CD8-positive, alpha-beta T cell (primary cell): ENCODE measurements at regions of chr22 and their contacts with region 1.

Region 1: GRCh38 chr22:31211862-31212730 is at the start of gene LIMK2:
- DNase-seq: peak; percentile 93 to 99 (median 97)
- ATAC-seq: peak; percentile 99
- H3K4me3 ChIP-seq: peak within 1 kb of the TSS; percentile 87 to 99
- H3K4me3 Mint-ChIP-seq: peak within 1 kb of the TSS; percentile 88
- H3K27ac ChIP-seq: peak within 1 kb of the TSS; percentile 50 to 80
- H3K27ac Mint-ChIP-seq: peak within 1 kb of the TSS; percentile 92
- H3K4me1 ChIP-seq: peaks cover 30% of the 10 kb centered on the region
- H3K4me1 Mint-ChIP-seq: peaks cover 45% of the 10 kb centered on the region
- H3K27me3 ChIP-seq: no peaks in the 10 kb centered on the region
- H3K27me3 Mint-ChIP-seq: no peaks in the 10 kb centered on the region
- CTCF ChIP-seq: peak; percentile 72
- total RNA-seq, gene LIMK2: 8.4 to 9.1 TPM

Region 2: DNA sequence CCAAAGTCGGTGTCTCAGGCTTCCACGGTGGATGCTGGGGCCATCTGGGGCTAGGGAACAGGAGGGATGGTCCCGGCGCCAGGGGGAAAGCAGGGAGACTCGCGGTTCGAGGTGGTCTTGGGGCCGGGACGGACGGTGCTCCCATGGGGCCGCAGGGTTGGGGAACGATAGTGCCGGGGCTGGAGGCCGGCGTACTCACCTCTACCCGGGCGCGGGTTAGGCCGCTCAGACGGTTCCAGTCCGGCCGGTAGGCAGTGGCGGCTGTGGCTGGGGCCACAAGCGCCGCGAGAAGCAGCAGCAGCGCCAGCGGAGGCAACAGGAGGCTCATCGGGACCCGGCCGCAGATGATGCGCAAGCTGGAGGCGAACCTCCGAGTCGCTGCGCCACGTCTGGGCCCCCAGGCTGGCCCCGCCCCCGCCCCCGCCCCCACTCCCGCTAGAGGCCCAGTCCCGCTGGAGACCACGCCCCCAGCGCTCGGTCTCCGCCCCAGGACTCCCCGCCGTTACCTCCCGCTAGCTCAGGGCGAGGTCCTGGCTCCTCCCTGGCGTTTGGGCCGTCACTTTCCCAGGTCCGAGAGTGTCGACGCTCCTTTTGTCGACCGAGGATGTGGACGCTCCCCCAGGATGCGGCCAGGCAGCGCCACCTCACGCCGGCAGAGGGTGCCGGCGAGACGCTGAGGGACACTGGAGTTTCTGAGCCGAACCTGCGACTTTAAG is 104.8 kb before region 1 on chr22 and contains the start of gene SELENOM:
- CTCF ChIA-PET with region 1: interaction called, 8 read pairs
- POLR2A ChIA-PET with region 1: interaction called, 6 read pairs
- intact Hi-C with region 1: loop called (anchors 1 to 5 kb)
- DNase-seq: peak; percentile 69 to 94 (median 85)
- ATAC-seq: peak; percentile 96
- H3K4me3 ChIP-seq: peak within 1 kb of the TSS; percentile 80 to 84
- H3K4me3 Mint-ChIP-seq: peak within 1 kb of the TSS; percentile 98
- H3K27ac ChIP-seq: peak within 1 kb of the TSS; percentile 72 to 80
- H3K27ac Mint-ChIP-seq: peak within 1 kb of the TSS; percentile 91
- H3K4me1 ChIP-seq: peaks cover 17% of the 10 kb centered on the region
- H3K4me1 Mint-ChIP-seq: peaks cover 25% of the 10 kb centered on the region
- H3K27me3 ChIP-seq: no peaks in the 10 kb centered on the region
- H3K27me3 Mint-ChIP-seq: no peaks in the 10 kb centered on the region
- CTCF ChIP-seq: peak; percentile 70
- total RNA-seq, gene SELENOM: 55.6 to 62.2 TPM

Region 3: DNA sequence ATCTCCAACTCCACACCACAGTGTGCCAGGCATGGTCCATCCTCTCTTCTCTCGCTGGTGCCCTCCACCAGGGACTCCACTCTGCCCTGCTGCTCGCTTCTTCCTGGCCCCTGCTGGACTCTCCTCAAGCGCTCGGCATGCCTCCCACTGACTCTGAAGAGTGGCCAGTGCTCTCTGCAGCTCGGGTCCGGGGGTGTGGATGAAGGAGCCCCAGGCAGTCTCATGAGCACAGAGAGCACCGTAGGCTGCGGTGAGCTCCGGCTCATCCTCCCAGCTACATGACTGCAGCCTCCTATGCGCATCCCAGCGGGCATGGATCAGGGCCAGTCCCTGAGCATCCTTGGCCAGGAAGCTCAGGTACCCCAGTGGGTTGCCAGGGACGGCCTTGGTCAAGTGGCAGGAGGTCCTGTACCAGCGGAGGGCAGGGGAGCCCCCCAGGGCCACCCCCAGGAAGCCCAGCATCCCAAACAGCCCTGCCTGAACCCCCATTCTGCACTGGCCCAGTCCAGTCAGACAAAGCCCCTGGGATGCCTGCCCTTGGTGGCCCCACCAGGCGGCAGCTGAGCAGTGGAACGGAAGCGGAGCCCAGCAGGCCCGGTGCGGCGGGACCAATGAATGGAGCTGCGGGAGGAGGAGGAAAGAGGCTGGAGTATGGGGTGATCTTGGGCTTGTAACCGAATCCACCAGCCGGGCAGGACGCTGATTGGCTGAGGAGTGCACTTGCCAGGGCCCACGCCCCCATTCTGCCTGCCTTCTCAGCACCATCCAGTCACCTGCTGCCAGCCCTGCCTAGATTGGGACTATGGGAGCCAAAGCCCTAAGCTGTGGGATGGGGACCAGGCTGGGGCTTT is 72.0 kb before region 1 on chr22 and contains the start of gene PLA2G3:
- CTCF ChIA-PET with region 1: no interaction called
- POLR2A ChIA-PET with region 1: no interaction called
- intact Hi-C with region 1: no loop called
- DNase-seq: no peak
- ATAC-seq: no peak
- H3K4me3 ChIP-seq: no peak within 1 kb of the TSS
- H3K4me3 Mint-ChIP-seq: no peak within 1 kb of the TSS
- H3K27ac ChIP-seq: no peak within 1 kb of the TSS
- H3K27ac Mint-ChIP-seq: no peak within 1 kb of the TSS
- H3K4me1 ChIP-seq: no peaks in the 10 kb centered on the region
- H3K4me1 Mint-ChIP-seq: no peaks in the 10 kb centered on the region
- H3K27me3 ChIP-seq: no peaks in the 10 kb centered on the region
- H3K27me3 Mint-ChIP-seq: peaks cover 4% of the 10 kb centered on the region
- CTCF ChIP-seq: no peak
- total RNA-seq, gene PLA2G3: not detected

Region 4: DNA sequence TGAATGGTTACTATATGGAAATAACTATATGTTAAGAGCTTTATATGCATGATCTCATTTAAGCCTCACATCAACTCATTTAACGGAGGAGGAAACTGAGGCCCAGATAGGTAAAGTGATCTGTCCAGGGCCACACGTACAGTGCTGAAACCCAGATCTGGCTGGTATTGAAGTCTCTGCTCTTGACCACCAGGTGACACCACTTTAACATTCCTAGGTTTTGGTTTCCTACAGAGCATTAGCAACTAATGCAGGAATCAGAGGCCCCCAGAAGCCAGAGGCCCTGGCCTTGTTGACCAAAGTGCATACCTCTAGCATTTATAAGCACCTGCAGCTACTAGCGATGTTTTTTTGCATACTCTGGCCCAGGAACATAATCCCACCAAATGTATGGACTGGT is 12.9 kb before region 1 on chr22:
- CTCF ChIA-PET with region 1: interaction called, 16 read pairs
- POLR2A ChIA-PET with region 1: interaction called, 3 read pairs
- intact Hi-C with region 1: no loop called
- DNase-seq: peak in 2 of 9 experiments; percentile 12 to 30
- ATAC-seq: no peak
- H3K4me3 ChIP-seq: no peak overlapping the region
- H3K4me3 Mint-ChIP-seq: no peak overlapping the region
- H3K27ac ChIP-seq: no peak overlapping the region
- H3K27ac Mint-ChIP-seq: no peak overlapping the region
- H3K4me1 ChIP-seq: no peaks in the 10 kb centered on the region
- H3K4me1 Mint-ChIP-seq: no peaks in the 10 kb centered on the region
- H3K27me3 ChIP-seq: no peaks in the 10 kb centered on the region
- H3K27me3 Mint-ChIP-seq: no peaks in the 10 kb centered on the region
- CTCF ChIP-seq: no peak

Region 5: GRCh38 chr22:31248138-31248745 is 36.1 kb after region 1 on chr22:
- CTCF ChIA-PET with region 1: no interaction called
- POLR2A ChIA-PET with region 1: interaction called, 5 read pairs
- intact Hi-C with region 1: loop called in 1 of 2 experiments (anchors 5 kb)
- DNase-seq: peak; percentile 40 to 81 (median 72)
- ATAC-seq: peak; percentile 100
- H3K4me3 ChIP-seq: peak overlapping the region; percentile 21 to 33
- H3K4me3 Mint-ChIP-seq: peak overlapping the region; percentile 83
- H3K27ac ChIP-seq: no peak overlapping the region
- H3K27ac Mint-ChIP-seq: no peak overlapping the region
- H3K4me1 ChIP-seq: peaks cover 18% of the 10 kb centered on the region
- H3K4me1 Mint-ChIP-seq: peaks cover 26% of the 10 kb centered on the region
- H3K27me3 ChIP-seq: no peaks in the 10 kb centered on the region
- H3K27me3 Mint-ChIP-seq: no peaks in the 10 kb centered on the region
- CTCF ChIP-seq: no peak

Region 6: GRCh38 chr22:31278622-31279326 is 66.7 kb after region 1 on chr22:
- CTCF ChIA-PET with region 1: interaction called, 62 read pairs
- POLR2A ChIA-PET with region 1: interaction called, 20 read pairs
- intact Hi-C with region 1: loop called (anchors 1 to 2 kb)
- DNase-seq: peak in 8 of 9 experiments; percentile 30 to 78 (median 64)
- ATAC-seq: peak; percentile 73
- H3K4me3 ChIP-seq: no peak overlapping the region
- H3K4me3 Mint-ChIP-seq: peak overlapping the region; percentile 73
- H3K27ac ChIP-seq: peak overlapping the region; percentile 54 to 76
- H3K27ac Mint-ChIP-seq: peak overlapping the region; percentile 94
- H3K4me1 ChIP-seq: peaks cover 93% of the 10 kb centered on the region
- H3K4me1 Mint-ChIP-seq: peaks cover 89% of the 10 kb centered on the region
- H3K27me3 ChIP-seq: no peaks in the 10 kb centered on the region
- H3K27me3 Mint-ChIP-seq: no peaks in the 10 kb centered on the region
- CTCF ChIP-seq: no peak

Region 7: GRCh38 chr22:31496007-31496734 is 284.1 kb after region 1 on chr22 and contains the start of gene SFI1:
- CTCF ChIA-PET with region 1: no interaction called
- POLR2A ChIA-PET with region 1: no interaction called
- intact Hi-C with region 1: loop called in 1 of 2 experiments (anchors 2 kb)
- DNase-seq: peak; percentile 93 to 98 (median 96)
- ATAC-seq: peak; percentile 83
- H3K4me3 ChIP-seq: peak within 1 kb of the TSS; percentile 83 to 91
- H3K4me3 Mint-ChIP-seq: peak within 1 kb of the TSS; percentile 95
- H3K27ac ChIP-seq: peak within 1 kb of the TSS; percentile 87 to 90
- H3K27ac Mint-ChIP-seq: peak within 1 kb of the TSS; percentile 99
- H3K4me1 ChIP-seq: peaks cover 27% of the 10 kb centered on the region
- H3K4me1 Mint-ChIP-seq: peaks cover 45% of the 10 kb centered on the region
- H3K27me3 ChIP-seq: no peaks in the 10 kb centered on the region
- H3K27me3 Mint-ChIP-seq: no peaks in the 10 kb centered on the region
- CTCF ChIP-seq: no peak
- total RNA-seq, gene SFI1: 217 to 235 TPM

Region 8: DNA sequence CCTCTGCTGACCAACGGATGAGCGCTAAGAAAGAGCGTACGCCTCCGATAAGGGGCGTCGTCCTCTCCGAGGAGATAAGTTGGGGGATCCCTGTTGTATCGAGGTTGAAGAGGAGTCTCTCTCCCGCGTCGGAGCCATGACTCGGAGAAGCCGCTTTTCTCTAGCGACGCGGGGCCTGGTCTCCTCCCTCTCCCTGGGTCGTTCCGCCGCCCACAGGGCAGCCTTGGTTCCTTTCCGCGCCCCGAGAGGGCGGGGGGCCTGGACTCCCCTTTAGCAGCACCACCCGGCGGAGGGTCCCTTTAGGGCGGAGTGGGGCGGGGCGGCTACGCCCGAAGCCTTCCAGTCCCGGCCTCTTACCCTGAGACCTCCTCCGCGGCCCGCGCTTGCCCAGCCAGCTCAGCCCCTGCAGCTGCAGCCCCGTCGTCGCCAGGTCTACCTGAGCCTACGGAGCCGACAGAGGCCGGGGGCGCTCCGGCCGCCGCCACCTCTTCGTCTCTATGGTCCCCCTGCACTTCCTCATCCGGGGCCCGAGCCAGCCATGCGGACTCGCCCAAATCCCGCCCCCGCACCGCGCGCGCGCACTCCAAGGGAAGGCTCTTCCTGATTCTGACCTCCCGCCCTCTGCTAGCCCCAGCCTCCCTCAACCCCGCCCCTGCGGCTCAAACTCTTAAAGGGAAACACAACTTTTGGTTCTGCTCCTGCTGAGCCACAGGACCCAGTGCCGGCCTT is 537.7 kb after region 1 on chr22 and contains the start of gene PRR14L:
- CTCF ChIA-PET with region 1: no interaction called
- POLR2A ChIA-PET with region 1: no interaction called
- intact Hi-C with region 1: loop called in 1 of 2 experiments (anchors 5 kb)
- DNase-seq: peak; percentile 96 to 100 (median 99)
- ATAC-seq: peak; percentile 75
- H3K4me3 ChIP-seq: peak within 1 kb of the TSS; percentile 84 to 90
- H3K4me3 Mint-ChIP-seq: peak within 1 kb of the TSS; percentile 98
- H3K27ac ChIP-seq: peak within 1 kb of the TSS; percentile 79 to 84
- H3K27ac Mint-ChIP-seq: peak within 1 kb of the TSS; percentile 97
- H3K4me1 ChIP-seq: peaks cover 40% of the 10 kb centered on the region
- H3K4me1 Mint-ChIP-seq: peaks cover 53% of the 10 kb centered on the region
- H3K27me3 ChIP-seq: no peaks in the 10 kb centered on the region
- H3K27me3 Mint-ChIP-seq: no peaks in the 10 kb centered on the region
- CTCF ChIP-seq: no peak
- total RNA-seq, gene PRR14L: 17.8 to 21.2 TPM